Vagina (tissue), 2 donors: ENCODE measurements at regions of chr3 and their contacts with region 1.

Region 1: DNA sequence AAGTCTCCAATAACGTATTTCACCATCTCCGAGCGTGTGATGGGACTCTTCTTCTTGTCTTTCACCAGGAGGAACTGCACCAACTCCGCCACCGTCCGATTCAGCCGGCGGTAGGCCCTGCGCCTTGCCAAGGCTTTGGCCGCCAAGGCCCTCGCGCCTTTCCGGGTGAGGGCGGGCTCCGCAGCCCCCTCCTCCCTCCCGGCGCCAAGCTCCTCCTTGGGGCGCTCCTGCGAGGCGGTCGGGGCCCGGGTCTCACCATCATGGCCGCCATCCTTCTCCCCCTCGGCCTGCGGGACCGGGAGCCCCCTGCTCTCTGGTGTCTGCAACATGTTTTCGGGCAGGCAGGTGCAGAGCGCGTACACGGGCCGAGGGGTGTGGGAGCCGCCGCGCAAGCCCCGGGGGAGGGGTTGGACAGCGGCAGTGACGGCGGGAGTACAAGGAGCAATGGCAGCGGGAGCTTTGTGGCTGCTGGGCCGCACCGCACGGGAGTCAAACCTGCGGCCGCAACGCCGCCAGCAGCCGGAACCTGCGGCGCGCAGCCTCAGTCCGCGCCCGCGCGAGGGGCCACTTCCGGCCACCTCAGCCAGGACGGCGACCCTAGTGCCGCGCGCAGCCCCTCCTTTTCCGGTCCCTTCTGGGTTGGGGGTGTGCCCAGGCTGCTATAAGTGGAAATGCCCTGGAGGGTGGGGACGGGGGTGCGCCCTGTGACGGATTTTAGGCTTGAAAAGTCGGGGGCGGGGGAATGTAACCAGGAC is at the start of gene MAGEF1:
- DNase-seq: peak; percentile 85 to 87
- H3K4me3 ChIP-seq: peak within 1 kb of the TSS; percentile 84 to 91
- H3K27ac ChIP-seq: peak within 1 kb of the TSS; percentile 92
- H3K4me1 ChIP-seq: peaks cover 36% of the 10 kb centered on the region
- H3K27me3 ChIP-seq: no peaks in the 10 kb centered on the region
- CTCF ChIP-seq: no peak
- POLR2A ChIP-seq: peak in 1 of 2 donors; percentile 49
- total RNA-seq, gene MAGEF1: 25.5 TPM

Region 2: DNA sequence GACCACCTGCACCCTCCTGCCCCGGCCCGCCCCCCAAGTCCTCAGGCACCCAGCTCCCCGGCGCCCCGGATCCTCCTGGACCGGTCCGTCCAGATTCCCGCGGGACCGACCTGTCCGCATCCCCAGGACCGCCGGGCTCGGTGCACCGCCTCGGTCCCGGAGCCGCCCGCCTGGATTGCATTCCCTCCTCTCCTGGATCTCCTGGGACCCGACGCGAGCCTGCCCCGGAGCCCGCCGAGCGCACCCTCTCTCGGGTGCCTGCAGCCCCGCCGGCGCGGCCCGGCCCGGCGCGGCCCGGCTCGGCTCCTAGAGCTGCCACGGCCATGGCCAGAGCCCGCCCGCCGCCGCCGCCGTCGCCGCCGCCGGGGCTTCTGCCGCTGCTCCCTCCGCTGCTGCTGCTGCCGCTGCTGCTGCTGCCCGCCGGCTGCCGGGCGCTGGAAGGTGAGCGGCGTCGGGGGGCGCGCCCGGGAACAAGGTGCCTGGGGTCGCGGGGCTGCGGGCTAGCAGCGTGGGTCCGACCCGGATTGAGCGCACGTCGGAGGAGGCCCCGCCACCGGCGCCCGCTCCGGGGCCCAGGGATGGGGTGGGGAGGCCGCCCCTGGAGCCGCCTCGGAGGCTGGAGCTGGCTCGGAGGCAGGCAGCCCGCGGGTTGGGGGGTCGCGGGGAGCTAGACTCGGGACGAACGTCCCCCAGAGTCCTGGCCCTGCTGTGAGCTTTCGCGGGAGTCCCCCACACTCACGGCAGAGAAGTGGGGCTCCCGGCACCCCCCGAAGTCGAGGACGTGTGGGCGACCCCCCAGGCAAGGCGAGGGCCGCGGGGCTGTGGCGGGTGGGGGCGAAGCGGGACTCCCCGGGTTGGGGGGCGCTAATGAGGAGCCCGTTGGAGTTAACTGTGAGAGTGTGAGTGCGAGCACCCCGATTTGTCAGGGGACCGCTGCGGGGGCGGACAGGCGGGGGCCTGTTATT is 149.5 kb before region 1 on chr3:
- intact Hi-C with region 1: loop called (anchors 1 kb)
- DNase-seq: no peak
- H3K4me3 ChIP-seq: peak overlapping the region; percentile 72 to 75
- H3K27ac ChIP-seq: peak overlapping the region; percentile 87
- H3K4me1 ChIP-seq: peaks cover 45% of the 10 kb centered on the region
- H3K27me3 ChIP-seq: no peaks in the 10 kb centered on the region
- CTCF ChIP-seq: no peak
- POLR2A ChIP-seq: no peak

Region 3: GRCh38 chr3:184583578-184584425 is 127.9 kb before region 1 on chr3:
- intact Hi-C with region 1: loop called (anchors 5 kb)
- DNase-seq: no peak
- H3K4me3 ChIP-seq: peak overlapping the region; percentile 42 to 55
- H3K27ac ChIP-seq: peak overlapping the region; percentile 71
- H3K4me1 ChIP-seq: peaks cover 24% of the 10 kb centered on the region
- H3K27me3 ChIP-seq: no peaks in the 10 kb centered on the region
- CTCF ChIP-seq: no peak
- POLR2A ChIP-seq: no peak